ENCODE measurements at regions of chr1 and their contacts with region 1.

Region 1: GRCh38 chr1:75916834-75917233 is 15.4 kb downstream of the ASB17 start:
- DNase-seq: no peak
- H3K4me3 ChIP-seq: no peak overlapping the region
- H3K27ac ChIP-seq: no peak overlapping the region
- H3K4me1 ChIP-seq: no peaks in the 10 kb centered on the region
- H3K27me3 ChIP-seq: no peaks in the 10 kb centered on the region
- CTCF ChIP-seq: no peak

Region 2: DNA sequence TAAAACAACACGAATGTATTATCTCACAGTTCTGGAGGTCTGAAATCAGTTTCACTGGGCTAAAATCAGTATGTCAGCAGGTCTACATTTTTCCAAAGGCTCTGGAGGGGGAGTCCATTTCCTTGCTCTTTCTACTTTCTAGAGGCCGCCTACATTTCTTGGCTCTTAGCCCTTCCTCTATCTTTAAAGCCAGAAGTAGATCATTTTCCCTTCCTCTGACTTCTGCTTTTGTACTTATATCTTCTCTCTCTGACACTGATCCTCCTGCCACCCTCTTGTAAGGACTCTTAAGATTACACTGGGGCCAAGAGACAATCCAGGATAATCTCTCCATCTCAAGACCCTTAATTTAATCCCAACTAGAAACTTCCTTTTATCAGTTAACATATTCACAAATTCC is 78.8 kb before region 1 on chr1:
- CTCF ChIA-PET with region 1: no interaction called
- POLR2A ChIA-PET with region 1: no interaction called
- intact Hi-C with region 1: no loop called
- DNase-seq: no peak
- H3K4me3 ChIP-seq: no peak overlapping the region
- H3K27ac ChIP-seq: no peak overlapping the region
- H3K4me1 ChIP-seq: no peaks in the 10 kb centered on the region
- H3K27me3 ChIP-seq: 0 out of 2 replicates have a peak, but pooled peaks cover 2% of the 10 kb centered on the region
- CTCF ChIP-seq: no peak

Region 3: DNA sequence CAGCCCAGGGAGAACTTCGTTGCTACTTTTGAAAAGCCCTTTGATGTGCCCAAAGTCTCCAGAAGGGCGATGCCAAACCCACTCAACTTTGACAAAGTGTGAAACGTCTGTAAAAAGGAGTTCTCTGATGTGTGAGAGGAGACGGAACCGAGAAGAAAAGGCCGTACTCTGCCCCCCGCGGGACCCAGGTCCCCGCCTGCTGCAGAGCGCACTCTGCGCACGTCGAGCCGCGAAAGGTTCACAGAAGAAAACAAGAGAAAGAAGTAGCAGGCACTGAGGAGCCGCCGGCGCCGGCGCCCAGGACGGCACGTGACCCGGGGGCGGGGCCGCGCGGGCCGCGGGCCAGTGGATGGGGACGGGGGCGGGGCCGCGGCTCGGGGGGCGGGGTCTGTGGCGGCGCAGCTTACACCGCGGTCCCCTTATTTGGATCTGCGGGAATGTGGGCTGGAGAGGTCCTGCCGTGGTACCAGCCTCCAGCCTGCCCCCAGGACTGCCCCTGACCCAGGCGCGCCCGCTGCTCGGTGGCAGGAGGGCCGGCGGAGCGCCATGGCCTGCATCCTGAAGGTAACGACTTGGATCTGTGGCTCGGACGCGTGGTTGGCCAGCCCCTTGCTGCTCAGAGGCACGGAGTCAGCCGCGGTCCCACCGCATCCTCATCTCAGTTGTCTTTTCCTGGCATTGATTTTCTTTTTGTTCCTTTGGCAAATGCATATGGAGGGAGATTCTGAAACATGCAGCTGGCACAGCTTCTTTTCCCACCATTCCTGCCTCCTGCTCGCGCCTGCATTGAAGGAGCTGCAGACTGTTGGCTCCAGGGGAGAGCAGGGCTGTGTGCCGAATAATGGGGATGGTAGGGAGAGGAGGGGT is 157.7 kb after region 1 on chr1 and contains the start of gene ST6GALNAC3:
- CTCF ChIA-PET with region 1: no interaction called
- POLR2A ChIA-PET with region 1: no interaction called
- intact Hi-C with region 1: no loop called
- DNase-seq: peak in 1 of 2 experiments; percentile 9
- H3K4me3 ChIP-seq: no peak within 1 kb of the TSS
- H3K27ac ChIP-seq: no peak within 1 kb of the TSS
- H3K4me1 ChIP-seq: no peaks in the 10 kb centered on the region
- H3K27me3 ChIP-seq: no peaks in the 10 kb centered on the region
- CTCF ChIP-seq: no peak
- total RNA-seq, gene ST6GALNAC3: 0.04 TPM in 1 of 2 replicates, not detected in the other

Region 4: DNA sequence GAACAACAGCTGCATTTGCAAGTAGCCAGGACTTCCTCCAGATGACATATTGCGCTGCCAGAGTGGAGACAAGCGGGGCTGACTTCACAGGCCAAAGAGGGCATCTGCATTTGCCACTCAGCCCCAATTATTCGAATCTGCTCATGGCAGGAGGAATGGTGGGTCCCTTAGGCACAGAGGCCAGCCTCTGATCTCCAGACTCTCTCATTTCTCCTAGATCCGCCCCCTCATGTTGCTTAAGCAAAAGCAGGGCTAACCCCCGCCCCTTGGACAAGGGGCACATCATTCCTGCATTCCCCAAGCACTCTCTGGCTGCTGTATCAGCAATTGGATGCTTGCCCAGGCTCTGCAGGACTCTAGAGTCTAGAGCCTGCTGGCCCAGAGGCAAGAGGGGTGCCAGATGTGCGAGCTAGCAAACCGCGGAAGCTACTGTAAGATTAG is 420.1 kb after region 1 on chr1:
- CTCF ChIA-PET with region 1: no interaction called
- POLR2A ChIA-PET with region 1: interaction called, 12 read pairs
- intact Hi-C with region 1: no loop called
- DNase-seq: no peak
- H3K4me3 ChIP-seq: no peak overlapping the region
- H3K27ac ChIP-seq: no peak overlapping the region
- H3K4me1 ChIP-seq: no peaks in the 10 kb centered on the region
- H3K27me3 ChIP-seq: no peaks in the 10 kb centered on the region
- CTCF ChIP-seq: no peak

Measured in PC-9 (cell line).